ENCODE measurements at regions of chr14 and their contacts with region 1.

Region 1: GRCh38 chr14:61360796-61361525 is 39.6 kb downstream of the PRKCH start:
- DNase-seq: no peak
- H3K4me3 ChIP-seq: peak overlapping the region in 1 of 2 donors; percentile 16
- H3K4me3 Mint-ChIP-seq: peak overlapping the region; percentile 2 to 79 (median 62)
- H3K27ac ChIP-seq: no peak overlapping the region
- H3K27ac Mint-ChIP-seq: peak overlapping the region; percentile 43 to 88 (median 80)
- H3K4me1 ChIP-seq: peaks cover 97% of the 10 kb centered on the region
- H3K4me1 Mint-ChIP-seq: peaks cover 47 to 55% (median 52%) of the 10 kb centered on the region in 4 donors
- H3K27me3 ChIP-seq: no peaks in the 10 kb centered on the region
- H3K27me3 Mint-ChIP-seq: no peaks in the 10 kb centered on the region

Region 2: GRCh38 chr14:61326847-61327246 is 34.1 kb before region 1 on chr14:
- CTCF ChIA-PET with region 1: interaction called, 3 read pairs
- POLR2A ChIA-PET with region 1: interaction called, 10 read pairs
- intact Hi-C with region 1: no loop called
- DNase-seq: peak in 1 of 5 donors; percentile 43
- H3K4me3 ChIP-seq: peak overlapping the region; percentile 39 to 51
- H3K4me3 Mint-ChIP-seq: peak overlapping the region; percentile 77 to 100 (median 98)
- H3K27ac ChIP-seq: peak overlapping the region; percentile 89
- H3K27ac Mint-ChIP-seq: peak overlapping the region in 6 of 7 donors; percentile 84 to 99 (median 94)
- H3K4me1 ChIP-seq: peaks cover 67% of the 10 kb centered on the region
- H3K4me1 Mint-ChIP-seq: peaks cover 47 to 88% (median 56%) of the 10 kb centered on the region in 4 donors
- H3K27me3 ChIP-seq: no peaks in the 10 kb centered on the region
- H3K27me3 Mint-ChIP-seq: no peaks in the 10 kb centered on the region

Region 3: GRCh38 chr14:61347826-61348443 is 13.0 kb before region 1 on chr14:
- CTCF ChIA-PET with region 1: interaction called, 6 read pairs
- POLR2A ChIA-PET with region 1: interaction called, 15 read pairs
- intact Hi-C with region 1: no loop called
- DNase-seq: peak in 1 of 5 donors; percentile 73
- H3K4me3 ChIP-seq: peak overlapping the region; percentile 21 to 51
- H3K4me3 Mint-ChIP-seq: peak overlapping the region; percentile 76 to 88 (median 86)
- H3K27ac ChIP-seq: peak overlapping the region; percentile 78
- H3K27ac Mint-ChIP-seq: peak overlapping the region; percentile 93 to 98 (median 96)
- H3K4me1 ChIP-seq: peaks cover 100% of the 10 kb centered on the region
- H3K4me1 Mint-ChIP-seq: peaks cover 83 to 100% (median 90%) of the 10 kb centered on the region in 4 donors
- H3K27me3 ChIP-seq: no peaks in the 10 kb centered on the region
- H3K27me3 Mint-ChIP-seq: no peaks in the 10 kb centered on the region

Region 4: DNA sequence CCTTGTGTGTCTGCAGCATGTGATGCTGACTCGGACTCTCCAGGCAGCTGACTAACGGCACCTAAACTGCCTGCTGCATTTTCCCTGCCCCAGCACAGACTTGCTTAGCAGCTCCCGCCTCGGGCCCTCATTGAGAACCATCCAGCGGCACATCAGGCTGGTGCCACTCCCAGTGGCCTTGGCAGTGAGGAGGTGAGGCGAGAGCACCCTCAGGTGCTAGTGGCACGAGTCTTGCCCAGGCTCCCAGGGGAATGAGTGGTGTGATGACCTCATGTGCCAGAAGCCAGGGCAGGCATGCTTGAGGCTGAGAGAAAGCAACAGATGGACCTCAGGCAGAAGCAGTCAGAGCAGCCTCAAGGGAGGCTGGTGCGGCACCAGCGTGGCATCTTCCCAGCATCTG is 20.6 kb after region 1 on chr14:
- CTCF ChIA-PET with region 1: interaction called, 5 read pairs
- POLR2A ChIA-PET with region 1: interaction called, 19 read pairs
- intact Hi-C with region 1: loop called (anchors 2 kb)
- DNase-seq: no peak
- H3K4me3 ChIP-seq: no peak overlapping the region
- H3K4me3 Mint-ChIP-seq: peak overlapping the region in 7 of 8 donors; percentile 23 to 87 (median 68)
- H3K27ac ChIP-seq: peak overlapping the region; percentile 27
- H3K27ac Mint-ChIP-seq: peak overlapping the region in 5 of 7 donors; percentile 77 to 93 (median 88)
- H3K4me1 ChIP-seq: peaks cover 100% of the 10 kb centered on the region
- H3K4me1 Mint-ChIP-seq: peaks cover 0 to 66% (median 29%) of the 10 kb centered on the region in 4 donors
- H3K27me3 ChIP-seq: no peaks in the 10 kb centered on the region
- H3K27me3 Mint-ChIP-seq: no peaks in the 10 kb centered on the region

Region 5: GRCh38 chr14:61388173-61388975 is 27.4 kb after region 1 on chr14:
- CTCF ChIA-PET with region 1: interaction called, 5 read pairs
- POLR2A ChIA-PET with region 1: interaction called, 6 read pairs
- intact Hi-C with region 1: loop called (anchors 2 kb)
- DNase-seq: peak; percentile 50 to 69 (median 61)
- H3K4me3 ChIP-seq: peak overlapping the region in 1 of 2 donors; percentile 26
- H3K4me3 Mint-ChIP-seq: peak overlapping the region in 2 of 8 donors; percentile 72 to 78
- H3K27ac ChIP-seq: peak overlapping the region; percentile 65
- H3K27ac Mint-ChIP-seq: no peak overlapping the region
- H3K4me1 ChIP-seq: peaks cover 100% of the 10 kb centered on the region
- H3K4me1 Mint-ChIP-seq: peaks cover 0 to 50% (median 20%) of the 10 kb centered on the region in 4 donors
- H3K27me3 ChIP-seq: no peaks in the 10 kb centered on the region
- H3K27me3 Mint-ChIP-seq: no peaks in the 10 kb centered on the region

Measured in CD4-positive, alpha-beta memory T cell (primary cell).